Left cardiac atrium (tissue), 4 donors: ENCODE measurements at regions of chr12 and their contacts with region 1.

Region 1: DNA sequence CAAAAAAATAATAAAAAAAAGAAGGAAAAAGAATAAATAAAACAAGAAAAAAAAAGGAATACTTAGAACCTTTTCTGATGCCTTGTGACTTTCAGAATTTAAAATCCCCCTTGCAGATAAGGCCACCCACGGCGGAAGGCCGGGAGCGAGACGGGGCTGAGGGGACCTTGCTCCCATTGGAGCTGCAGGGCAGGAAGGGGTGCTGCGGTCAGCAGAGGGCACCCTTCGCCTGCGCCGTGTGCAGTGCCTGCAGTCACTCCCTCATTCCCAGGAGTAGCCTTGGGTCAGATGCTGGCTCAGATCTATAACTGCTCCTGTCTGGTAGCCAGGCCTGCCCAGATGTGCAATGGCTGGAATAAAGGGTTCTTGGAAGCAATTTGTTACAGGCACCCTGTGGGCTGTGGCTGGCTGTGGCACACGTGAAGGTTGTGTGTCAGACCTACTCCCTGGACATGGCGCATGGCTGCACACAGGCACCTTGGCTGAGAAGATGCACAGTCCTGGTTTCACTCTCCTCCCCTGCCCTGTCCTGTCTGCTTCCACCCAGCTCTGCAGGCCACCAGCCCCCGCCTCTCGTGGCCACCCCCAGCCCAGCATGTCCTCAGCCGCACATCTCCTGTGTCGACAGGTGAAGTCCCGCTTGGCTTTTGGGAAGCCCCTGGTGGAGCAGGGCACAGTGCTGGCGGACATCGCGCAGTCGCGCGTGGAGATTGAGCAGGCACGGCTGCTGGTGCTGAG is 13.4 kb upstream of the ALDH2 start:
- DNase-seq: peak; percentile 77
- ATAC-seq: peak; percentile 80 to 83

Region 2: DNA sequence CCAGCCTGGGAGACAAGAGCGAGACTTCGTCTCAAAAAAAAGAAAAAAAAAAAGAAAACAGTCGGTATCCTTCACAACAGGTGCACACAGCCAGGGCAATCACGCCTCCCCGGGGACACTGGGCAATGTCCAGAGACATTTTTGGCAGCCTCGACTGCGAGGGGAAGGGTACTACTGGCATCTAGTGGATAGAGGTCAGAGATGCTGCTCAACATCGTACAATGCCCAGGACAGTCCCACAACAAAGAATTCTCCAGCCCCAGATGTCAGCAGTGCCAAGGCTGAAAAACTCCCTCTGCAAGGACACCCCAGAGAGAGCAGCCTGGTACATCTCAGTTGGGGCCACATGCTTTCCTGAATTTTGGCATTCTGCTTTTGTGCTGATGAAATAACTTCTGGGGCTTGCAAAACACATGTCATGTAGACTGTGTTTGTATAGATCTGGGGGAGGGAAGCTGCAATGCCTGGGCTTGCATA is 34.9 kb after region 1 on chr12:
- intact Hi-C with region 1: loop called in 1 of 2 experiments (anchors 5 kb)
- DNase-seq: peak; percentile 46
- ATAC-seq: peak; percentile 50 to 63

Region 3: DNA sequence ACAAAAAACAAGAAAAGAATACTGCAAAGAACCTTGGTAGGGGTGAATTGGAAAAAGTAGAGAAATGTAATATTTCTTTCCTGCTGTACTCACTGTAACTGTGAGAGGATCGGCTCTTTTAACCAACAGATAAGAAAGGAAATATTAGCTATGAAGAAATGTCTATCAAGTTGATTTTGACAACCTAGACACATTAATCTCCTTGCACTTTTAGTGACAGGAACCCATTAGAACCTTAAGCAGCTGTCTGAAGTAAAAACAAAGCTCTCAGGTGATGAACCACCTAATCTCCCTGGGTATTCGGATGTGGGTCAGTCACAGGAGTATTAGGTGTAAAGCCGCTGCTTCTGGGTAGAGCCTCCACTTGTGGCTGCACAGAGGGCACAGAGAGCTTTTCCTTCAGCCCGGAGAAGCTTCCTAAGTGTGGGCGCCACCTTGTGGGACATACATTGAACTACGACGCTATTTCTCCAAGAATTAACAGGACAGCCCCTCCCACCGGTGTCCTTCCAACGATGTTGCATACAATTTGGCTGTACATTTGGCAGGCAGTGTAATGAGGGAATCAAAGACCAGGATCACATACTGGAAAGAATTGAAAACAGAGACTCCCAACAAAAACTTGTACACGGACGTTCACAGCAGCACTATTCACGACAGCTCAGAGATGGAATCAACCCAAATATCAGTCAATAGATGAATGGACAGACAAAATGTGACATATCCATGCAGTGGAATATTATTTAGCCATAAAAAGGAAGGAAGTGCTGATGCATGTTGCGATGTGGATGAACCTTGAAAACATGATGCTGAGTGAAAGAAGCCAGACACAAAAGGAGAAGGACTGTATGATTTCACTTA is 59.8 kb after region 1 on chr12:
- intact Hi-C with region 1: loop called (anchors 2 to 5 kb)
- DNase-seq: peak; percentile 80
- ATAC-seq: peak; percentile 92 to 94